GM10248 (cell line): ENCODE measurements at regions of chr9 and their contacts with region 1.

Region 1: GRCh38 chr9:12719431-12719830 is 26.2 kb downstream of the TYRP1 start:
- DNase-seq: no peak
- CTCF ChIP-seq: peak; percentile 30

Region 2: DNA sequence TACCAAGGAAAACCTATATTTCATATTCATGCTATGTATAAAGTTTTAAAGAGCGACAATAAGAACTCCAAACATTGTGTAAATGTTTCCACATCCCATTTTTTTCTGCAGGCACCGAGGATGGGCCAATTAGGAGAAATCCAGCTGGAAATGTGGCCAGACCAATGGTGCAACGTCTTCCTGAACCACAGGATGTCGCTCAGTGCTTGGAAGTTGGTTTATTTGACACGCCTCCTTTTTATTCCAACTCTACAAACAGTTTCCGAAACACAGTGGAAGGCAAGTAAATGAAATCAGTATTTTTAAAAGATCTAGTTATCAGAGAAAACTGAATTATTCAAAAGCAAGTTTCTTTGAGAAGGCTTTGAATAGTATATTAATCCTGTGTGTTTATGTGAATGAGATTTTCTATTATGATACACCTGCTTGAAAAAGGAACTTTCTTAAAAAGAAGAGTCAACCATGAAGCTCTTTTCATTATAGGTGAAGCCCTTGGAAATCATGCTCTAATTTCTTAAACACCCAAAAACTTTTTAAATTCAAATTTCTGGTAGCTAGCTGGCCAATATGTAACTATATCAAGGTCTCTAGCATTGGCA is 17.2 kb before region 1 on chr9:
- CTCF ChIA-PET with region 1: no interaction called
- POLR2A ChIA-PET with region 1: no interaction called
- DNase-seq: no peak
- CTCF ChIP-seq: no peak

Region 3: DNA sequence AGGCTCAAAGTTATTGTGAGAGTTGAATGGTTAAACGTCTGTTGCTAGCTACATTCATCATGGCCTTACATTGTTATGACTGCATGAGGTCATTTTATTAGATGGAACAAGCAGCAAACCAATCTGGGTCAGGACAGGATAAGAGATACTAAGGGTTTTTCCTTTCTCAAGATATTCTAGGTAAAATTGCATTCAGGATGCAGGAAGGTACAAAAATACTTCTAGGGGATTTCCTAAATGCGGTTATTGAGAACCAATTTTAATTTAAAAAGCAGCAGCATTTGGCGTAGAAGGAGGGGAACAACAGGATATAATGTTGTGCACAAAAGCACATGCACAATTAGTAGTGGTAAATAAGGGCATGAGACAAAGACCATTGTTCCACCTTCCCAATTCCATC is 16.2 kb after region 1 on chr9:
- CTCF ChIA-PET with region 1: interaction called, 13 read pairs
- POLR2A ChIA-PET with region 1: no interaction called
- DNase-seq: no peak
- CTCF ChIP-seq: no peak

Region 4: GRCh38 chr9:12819436-12820185 is 100.2 kb after region 1 on chr9:
- CTCF ChIA-PET with region 1: interaction called, 23 read pairs
- POLR2A ChIA-PET with region 1: no interaction called
- DNase-seq: peak; percentile 32
- CTCF ChIP-seq: peak; percentile 58